HCT116 (cell line): ENCODE measurements at regions of chr9 and their contacts with region 1.

Region 1: DNA sequence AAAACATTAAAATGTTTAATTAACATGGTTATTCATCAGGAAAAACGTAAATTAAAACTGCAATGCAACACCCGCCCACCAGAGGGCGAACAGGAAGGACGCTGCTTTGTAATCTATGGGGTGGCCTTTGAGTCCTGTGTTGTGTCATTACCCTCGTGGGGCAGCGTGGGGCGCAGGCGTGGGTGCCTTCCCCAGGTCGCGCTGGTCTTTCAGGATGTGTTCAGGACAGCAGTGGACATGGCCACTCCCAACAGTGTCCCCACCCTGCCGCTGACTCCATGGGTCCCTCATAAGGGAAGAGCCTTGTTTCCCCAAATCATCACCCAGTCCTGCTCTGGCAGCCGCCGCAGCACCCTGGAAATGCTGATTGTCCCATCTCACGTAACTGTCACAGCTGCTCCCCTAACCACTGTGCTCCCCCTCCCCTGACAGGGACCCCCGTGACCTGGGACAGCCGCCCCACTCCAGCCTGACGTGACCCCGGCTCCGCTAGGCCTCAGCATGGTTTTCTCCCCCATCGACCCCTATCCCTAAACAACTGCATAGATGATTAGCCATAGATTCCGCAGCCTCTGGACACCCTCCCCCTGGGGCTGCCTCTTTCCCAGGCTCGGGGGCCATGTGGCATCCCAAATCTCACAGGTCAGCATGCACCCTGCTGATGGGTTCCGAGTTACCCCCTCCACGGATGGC is 36.4 kb downstream of the GLT6D1 start:
- DNase-seq: peak; percentile 29
- ATAC-seq: peak; percentile 66
- H3K4me3 ChIP-seq: no peak overlapping the region
- H3K27ac ChIP-seq: no peak overlapping the region
- H3K4me1 ChIP-seq: peaks cover 0 to 4% of the 10 kb centered on the region in 2 experiments; a peak in 2 of 4 replicates
- H3K27me3 ChIP-seq: no peaks in the 10 kb centered on the region
- CTCF ChIP-seq: peak; percentile 71 to 75 (median 75)
- POLR2A ChIP-seq: no peak
- RAD21 ChIP-seq: peak; percentile 45

Region 2: DNA sequence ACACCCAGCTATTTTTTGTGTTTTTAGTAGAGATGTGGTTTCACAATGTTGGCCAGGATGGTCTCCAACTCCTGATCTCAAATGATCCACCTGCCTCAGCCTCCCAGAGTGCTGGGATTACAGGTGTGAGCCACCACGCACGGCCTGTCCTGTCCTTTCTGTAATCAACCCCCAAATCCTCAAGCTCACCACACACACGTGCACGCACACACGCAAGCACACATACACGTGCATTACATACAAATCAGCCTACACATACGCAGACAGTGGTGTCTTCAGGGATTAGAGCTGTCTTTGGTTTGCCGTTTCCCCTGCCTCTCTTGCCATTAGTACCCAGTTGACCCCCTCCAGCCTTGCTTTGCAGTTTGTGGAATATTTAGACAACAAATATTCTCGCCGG is 29.9 kb after region 1 on chr9:
- CTCF ChIA-PET with region 1: no interaction called
- POLR2A ChIA-PET with region 1: no interaction called
- RAD21 ChIA-PET with region 1: no interaction called
- intact Hi-C with region 1: no loop called
- DNase-seq: no peak
- ATAC-seq: no peak
- H3K4me3 ChIP-seq: no peak overlapping the region
- H3K27ac ChIP-seq: no peak overlapping the region
- H3K4me1 ChIP-seq: no peaks in the 10 kb centered on the region
- H3K27me3 ChIP-seq: peaks cover 21% of the 10 kb centered on the region
- CTCF ChIP-seq: no peak
- POLR2A ChIP-seq: no peak
- RAD21 ChIP-seq: no peak

Region 3: GRCh38 chr9:135726138-135726853 is 123.4 kb after region 1 on chr9:
- CTCF ChIA-PET with region 1: interaction called, 4 read pairs
- POLR2A ChIA-PET with region 1: no interaction called
- RAD21 ChIA-PET with region 1: no interaction called
- intact Hi-C with region 1: loop called (anchors 10 kb)
- DNase-seq: no peak
- ATAC-seq: peak; percentile 52
- H3K4me3 ChIP-seq: no peak overlapping the region
- H3K27ac ChIP-seq: no peak overlapping the region
- H3K4me1 ChIP-seq: no peaks in the 10 kb centered on the region
- H3K27me3 ChIP-seq: no peaks in the 10 kb centered on the region
- CTCF ChIP-seq: peak; percentile 39 to 50 (median 48); a peak in 5 of 6 replicates
- POLR2A ChIP-seq: no peak
- RAD21 ChIP-seq: peak; percentile 65

Region 4: GRCh38 chr9:135961277-135961705 is 358.4 kb after region 1 on chr9 and contains the start of gene UBAC1:
- CTCF ChIA-PET with region 1: no interaction called
- POLR2A ChIA-PET with region 1: no interaction called
- RAD21 ChIA-PET with region 1: no interaction called
- intact Hi-C with region 1: loop called (anchors 10 kb)
- DNase-seq: peak; percentile 90
- ATAC-seq: peak; percentile 95
- H3K4me3 ChIP-seq: peak within 1 kb of the TSS; percentile 91 to 98
- H3K27ac ChIP-seq: peak within 1 kb of the TSS; percentile 73
- H3K4me1 ChIP-seq: peaks cover 15 to 22% of the 10 kb centered on the region in 2 experiments
- H3K27me3 ChIP-seq: no peaks in the 10 kb centered on the region
- CTCF ChIP-seq: peak in 1 of 3 experiments; percentile 23; a peak in 3 of 6 replicates
- POLR2A ChIP-seq: no peak
- RAD21 ChIP-seq: no peak
- total RNA-seq, gene UBAC1: 54.8 TPM